ENCODE measurements at regions of chr1 and their contacts with region 1.

Region 1: GRCh38 chr1:234373064-234373958 is at the start of gene COA6:
- DNase-seq: peak; percentile 100
- H3K4me3 Mint-ChIP-seq: peak within 1 kb of the TSS; percentile 91
- H3K27ac Mint-ChIP-seq: peak within 1 kb of the TSS; percentile 98
- H3K4me1 Mint-ChIP-seq: peaks cover 44% of the 10 kb centered on the region
- H3K27me3 Mint-ChIP-seq: no peaks in the 10 kb centered on the region
- CTCF ChIP-seq: no peak
- total RNA-seq, gene COA6: 114 and 115 TPM in 2 replicates

Region 2: DNA sequence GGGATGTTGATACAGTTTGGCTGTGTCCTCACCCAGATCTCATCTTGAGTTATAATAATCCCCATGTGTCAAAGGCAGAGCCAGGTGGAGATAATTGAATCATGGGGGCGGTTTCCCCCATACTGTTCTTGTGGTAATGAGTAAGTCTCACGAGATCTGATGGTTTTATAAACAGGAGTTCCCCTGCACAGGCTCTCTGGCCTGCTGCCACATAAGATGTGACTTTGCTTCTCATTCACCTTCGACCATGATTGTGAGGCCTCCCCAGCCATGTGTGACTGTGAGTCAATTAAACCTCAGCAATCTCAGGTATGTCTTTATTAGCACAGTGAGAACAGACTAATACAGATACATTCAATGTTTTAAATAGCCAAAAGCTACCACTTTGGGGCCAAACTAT is 427.7 kb before region 1 on chr1:
- CTCF ChIA-PET with region 1: no interaction called
- POLR2A ChIA-PET with region 1: no interaction called
- intact Hi-C with region 1: no loop called
- DNase-seq: peak; percentile 21
- H3K4me3 Mint-ChIP-seq: no peak overlapping the region
- H3K27ac Mint-ChIP-seq: no peak overlapping the region
- H3K4me1 Mint-ChIP-seq: peaks cover 7% of the 10 kb centered on the region
- H3K27me3 Mint-ChIP-seq: no peaks in the 10 kb centered on the region
- CTCF ChIP-seq: no peak

Region 3: GRCh38 chr1:234135501-234135900 is 237.8 kb before region 1 on chr1:
- CTCF ChIA-PET with region 1: no interaction called
- POLR2A ChIA-PET with region 1: interaction called, 29 read pairs
- intact Hi-C with region 1: no loop called
- DNase-seq: no peak
- H3K4me3 Mint-ChIP-seq: no peak overlapping the region
- H3K27ac Mint-ChIP-seq: no peak overlapping the region
- H3K4me1 Mint-ChIP-seq: peaks cover 15% of the 10 kb centered on the region
- H3K27me3 Mint-ChIP-seq: no peaks in the 10 kb centered on the region
- CTCF ChIP-seq: no peak

Region 4: DNA sequence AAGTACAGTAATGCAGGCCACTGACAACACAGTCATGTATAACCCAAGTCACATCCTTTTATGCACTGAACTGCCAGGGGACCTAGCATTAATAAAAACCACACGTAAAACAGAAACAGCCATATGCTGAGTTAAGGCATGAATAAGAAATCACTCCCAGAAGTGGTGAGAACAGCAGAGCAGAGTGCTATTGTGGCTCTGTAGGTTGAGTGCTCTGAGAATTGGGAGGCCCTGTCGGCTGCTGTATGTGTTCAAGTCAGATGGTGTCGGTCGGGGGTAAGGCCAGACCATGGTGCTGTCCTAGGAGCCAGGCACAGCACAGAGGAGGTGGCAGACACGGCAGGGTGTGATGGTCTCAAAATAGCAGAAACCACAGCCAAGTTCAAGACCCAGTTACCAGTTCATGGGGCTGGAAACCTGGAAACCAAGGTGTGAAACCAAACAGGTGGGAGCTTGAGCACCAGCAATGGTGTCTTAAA is 126.6 kb before region 1 on chr1:
- CTCF ChIA-PET with region 1: no interaction called
- POLR2A ChIA-PET with region 1: no interaction called
- intact Hi-C with region 1: no loop called
- DNase-seq: no peak
- H3K4me3 Mint-ChIP-seq: no peak overlapping the region
- H3K27ac Mint-ChIP-seq: no peak overlapping the region
- H3K4me1 Mint-ChIP-seq: no peaks in the 10 kb centered on the region
- H3K27me3 Mint-ChIP-seq: no peaks in the 10 kb centered on the region
- CTCF ChIP-seq: no peak

Region 5: DNA sequence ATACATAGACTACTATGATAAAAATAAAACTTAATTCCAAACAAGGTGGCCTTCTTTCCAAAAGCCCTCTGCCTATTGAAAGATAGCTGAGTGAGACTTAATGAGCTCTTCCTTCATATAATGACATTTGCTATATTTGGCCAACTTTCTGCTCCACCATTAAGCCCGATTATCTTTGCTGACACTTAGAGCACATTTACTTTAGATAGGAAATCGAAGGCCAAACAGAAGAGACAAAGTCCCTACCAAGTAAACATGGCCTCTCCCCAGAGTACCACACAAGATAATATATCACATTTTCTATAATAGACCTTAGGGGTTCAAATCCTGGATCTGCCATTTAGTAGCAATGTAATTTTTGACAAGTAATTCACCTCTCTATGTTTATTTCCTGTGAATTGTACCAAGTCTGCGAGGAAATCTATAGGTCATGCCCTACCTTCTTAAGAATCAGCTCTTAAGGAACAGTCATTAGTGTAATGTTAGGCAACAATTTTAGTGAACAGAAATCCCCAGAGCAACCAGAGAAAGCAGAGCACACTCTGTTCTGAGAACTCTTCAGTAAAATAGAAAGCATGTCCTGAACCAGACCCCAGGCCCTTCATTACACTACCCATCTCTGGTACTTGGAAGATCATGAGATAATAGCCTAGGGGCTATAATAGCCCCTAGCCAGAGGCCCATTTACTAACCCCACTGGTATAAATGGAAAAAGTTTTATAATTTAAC is 17.4 kb before region 1 on chr1:
- CTCF ChIA-PET with region 1: interaction called, 16 read pairs
- POLR2A ChIA-PET with region 1: interaction called, 218 read pairs
- intact Hi-C with region 1: loop called (anchors 1 kb)
- DNase-seq: no peak
- H3K4me3 Mint-ChIP-seq: peak overlapping the region; percentile 86
- H3K27ac Mint-ChIP-seq: peak overlapping the region; percentile 89
- H3K4me1 Mint-ChIP-seq: peaks cover 12% of the 10 kb centered on the region
- H3K27me3 Mint-ChIP-seq: no peaks in the 10 kb centered on the region
- CTCF ChIP-seq: no peak

Region 6: GRCh38 chr1:234393190-234393589 is 19.9 kb after region 1 on chr1:
- CTCF ChIA-PET with region 1: interaction called, 5 read pairs
- POLR2A ChIA-PET with region 1: interaction called, 36 read pairs
- intact Hi-C with region 1: no loop called
- DNase-seq: no peak
- H3K4me3 Mint-ChIP-seq: no peak overlapping the region
- H3K27ac Mint-ChIP-seq: no peak overlapping the region
- H3K4me1 Mint-ChIP-seq: peaks cover 5% of the 10 kb centered on the region
- H3K27me3 Mint-ChIP-seq: no peaks in the 10 kb centered on the region
- CTCF ChIP-seq: no peak

Region 7: GRCh38 chr1:234466945-234467344 is 93.6 kb after region 1 on chr1:
- CTCF ChIA-PET with region 1: no interaction called
- POLR2A ChIA-PET with region 1: interaction called, 10 read pairs
- intact Hi-C with region 1: no loop called
- DNase-seq: no peak
- H3K4me3 Mint-ChIP-seq: no peak overlapping the region
- H3K27ac Mint-ChIP-seq: no peak overlapping the region
- H3K4me1 Mint-ChIP-seq: no peaks in the 10 kb centered on the region
- H3K27me3 Mint-ChIP-seq: no peaks in the 10 kb centered on the region
- CTCF ChIP-seq: no peak

Region 8: DNA sequence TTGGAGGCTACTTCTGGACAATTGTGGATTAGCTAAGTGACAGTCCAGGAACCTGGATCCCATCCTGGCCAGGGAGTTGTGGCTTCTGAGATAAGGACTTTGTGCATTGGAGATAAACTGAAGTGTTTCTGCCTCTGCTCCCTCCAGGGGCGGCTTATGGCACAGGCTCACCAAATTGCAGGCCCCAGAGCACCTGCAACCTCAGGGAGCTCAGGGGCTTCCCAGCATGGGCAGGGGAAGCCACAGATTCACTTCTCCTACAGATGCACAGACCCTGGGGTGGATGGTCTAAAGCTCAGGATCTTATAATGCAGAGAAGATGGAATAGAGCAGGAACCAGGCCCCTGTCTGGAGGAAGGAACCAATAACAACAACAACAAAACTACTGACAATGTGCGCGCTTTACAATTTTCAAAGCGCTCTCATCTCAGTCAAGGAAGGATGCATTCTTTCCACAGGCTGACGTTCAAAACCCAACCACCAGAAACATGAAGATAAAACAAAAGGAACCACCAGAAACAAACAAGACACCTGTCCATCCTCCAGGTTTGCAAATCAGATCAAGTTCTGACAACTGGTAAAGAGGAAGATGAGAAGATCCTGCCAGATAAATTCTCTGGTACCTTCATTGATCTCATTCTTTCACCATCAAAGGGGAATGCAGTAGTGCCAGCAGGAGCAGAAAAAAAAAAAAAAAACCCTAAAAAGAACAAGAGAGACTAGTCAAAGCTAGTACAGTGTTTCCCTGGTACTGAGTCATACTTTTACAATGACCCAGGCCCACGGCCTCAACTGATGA is 357.7 kb after region 1 on chr1:
- CTCF ChIA-PET with region 1: no interaction called
- POLR2A ChIA-PET with region 1: no interaction called
- intact Hi-C with region 1: no loop called
- DNase-seq: peak; percentile 79
- H3K4me3 Mint-ChIP-seq: no peak overlapping the region
- H3K27ac Mint-ChIP-seq: no peak overlapping the region
- H3K4me1 Mint-ChIP-seq: peaks cover 32% of the 10 kb centered on the region
- H3K27me3 Mint-ChIP-seq: no peaks in the 10 kb centered on the region
- CTCF ChIP-seq: no peak

Region 9: GRCh38 chr1:235045034-235045720 is 671.9 kb after region 1 on chr1:
- CTCF ChIA-PET with region 1: no interaction called
- POLR2A ChIA-PET with region 1: no interaction called
- intact Hi-C with region 1: no loop called
- DNase-seq: no peak
- H3K4me3 Mint-ChIP-seq: no peak overlapping the region
- H3K27ac Mint-ChIP-seq: no peak overlapping the region
- H3K4me1 Mint-ChIP-seq: peaks cover 11% of the 10 kb centered on the region
- H3K27me3 Mint-ChIP-seq: no peaks in the 10 kb centered on the region
- CTCF ChIP-seq: no peak